ENCODE measurements at regions of chr6 and their contacts with region 1.

Region 1: GRCh38 chr6:156686995-156687788 is 90.0 kb upstream of the ARID1B start:
- DNase-seq: peak; percentile 95
- H3K4me3 ChIP-seq: peak overlapping the region; percentile 53 to 85 (median 62)
- H3K27ac ChIP-seq: peak overlapping the region; percentile 85 to 99 (median 96)
- H3K4me1 ChIP-seq: peaks cover 7 to 52% (median 27%) of the 10 kb centered on the region in 6 donors
- H3K27me3 ChIP-seq: no peaks in the 10 kb centered on the region
- CTCF ChIP-seq: no peak
- POLR2A ChIP-seq: peak in 2 of 3 donors; percentile 63 to 88

Region 2: DNA sequence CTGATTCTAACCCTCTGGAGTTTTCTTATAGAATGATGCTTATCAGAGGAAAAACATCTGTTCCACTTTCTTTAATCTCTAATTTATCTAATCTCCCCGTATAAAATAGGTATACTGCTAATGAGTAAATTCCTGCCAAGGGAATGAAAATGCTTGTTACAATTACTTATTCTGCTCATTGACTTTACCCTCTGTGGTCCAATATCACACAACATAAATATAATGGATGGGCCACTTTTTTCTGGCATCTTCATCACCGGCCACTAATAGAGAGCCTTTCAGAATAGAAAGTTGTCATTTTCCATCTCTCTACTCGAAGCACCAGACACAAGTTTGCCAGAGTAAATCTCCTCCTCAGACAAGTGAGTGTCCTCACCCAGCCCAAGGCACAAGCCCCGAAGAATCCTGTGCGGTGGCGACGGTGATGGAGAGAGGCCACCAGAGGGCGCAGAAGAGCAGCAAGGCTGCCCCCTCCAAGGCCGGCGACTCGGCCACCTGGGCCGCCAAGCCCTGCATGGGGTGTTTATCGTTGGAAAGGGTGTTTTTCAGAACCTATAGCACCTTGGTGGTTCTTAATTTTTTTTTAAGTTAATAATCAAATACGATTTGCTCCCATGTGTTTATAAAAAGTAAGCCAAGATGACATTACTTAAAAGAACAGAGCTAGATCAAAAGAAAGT is 122.9 kb before region 1 on chr6:
- intact Hi-C with region 1: loop called (anchors 10 kb)
- DNase-seq: peak; percentile 95
- H3K4me3 ChIP-seq: no peak overlapping the region
- H3K27ac ChIP-seq: no peak overlapping the region
- H3K4me1 ChIP-seq: peaks cover 0 to 14% (median 7%) of the 10 kb centered on the region in 6 donors
- H3K27me3 ChIP-seq: no peaks in the 10 kb centered on the region
- CTCF ChIP-seq: peak; percentile 73 to 96 (median 88)
- POLR2A ChIP-seq: no peak

Region 3: GRCh38 chr6:156760377-156760776 is 73.2 kb after region 1 on chr6:
- intact Hi-C with region 1: no loop called
- DNase-seq: no peak
- H3K4me3 ChIP-seq: no peak overlapping the region
- H3K27ac ChIP-seq: no peak overlapping the region
- H3K4me1 ChIP-seq: peaks cover 0 to 8% (median 0%) of the 10 kb centered on the region in 6 donors
- H3K27me3 ChIP-seq: no peaks in the 10 kb centered on the region
- CTCF ChIP-seq: no peak
- POLR2A ChIP-seq: no peak

Region 4: DNA sequence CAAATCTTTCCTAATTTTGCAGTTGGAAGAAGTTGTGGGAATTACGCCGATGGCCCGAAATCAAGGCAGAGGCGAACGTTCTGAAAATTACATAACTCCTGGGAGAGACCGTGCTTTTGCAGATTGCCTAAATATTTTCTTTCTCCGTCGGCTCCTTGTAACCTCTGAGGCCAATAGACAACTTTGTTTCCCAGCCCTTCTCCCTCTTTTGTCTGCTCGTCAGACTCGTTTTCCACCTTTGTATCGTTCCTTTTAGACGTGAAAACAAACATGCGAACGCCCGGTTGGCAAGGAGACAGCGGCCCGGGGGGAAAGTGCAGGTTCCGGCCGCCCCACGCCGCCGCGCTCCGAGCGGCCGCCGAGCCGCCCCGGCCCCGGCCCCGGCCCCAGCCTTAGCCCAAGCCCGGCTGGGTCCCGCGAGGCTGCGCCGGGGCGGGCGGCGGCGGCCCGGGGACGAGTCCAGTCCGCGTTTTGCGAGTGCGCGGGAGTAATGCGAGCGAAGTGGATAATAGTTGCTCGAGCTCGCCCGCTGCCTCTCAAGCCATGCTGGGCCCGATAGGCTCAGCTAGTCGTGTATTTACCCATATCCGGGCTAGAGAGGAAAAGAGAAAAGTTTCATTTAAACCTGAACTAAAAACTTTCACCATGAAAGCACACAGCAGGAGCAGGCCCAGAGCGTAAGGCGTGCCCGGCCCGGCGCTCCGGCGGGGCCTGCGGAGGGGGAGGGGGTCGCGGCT is 89.8 kb after region 1 on chr6 and contains the start of gene ARID1B:
- intact Hi-C with region 1: loop called (anchors 5 kb)
- DNase-seq: peak; percentile 97
- H3K4me3 ChIP-seq: peak within 1 kb of the TSS; percentile 65 to 90 (median 72)
- H3K27ac ChIP-seq: peak within 1 kb of the TSS; percentile 95 to 98 (median 98)
- H3K4me1 ChIP-seq: peaks cover 6 to 55% (median 38%) of the 10 kb centered on the region in 6 donors
- H3K27me3 ChIP-seq: no peaks in the 10 kb centered on the region
- CTCF ChIP-seq: no peak
- POLR2A ChIP-seq: peak in 2 of 3 donors; percentile 51 to 73
- total RNA-seq, gene ARID1B: 123 to 223 (median 149) TPM

Measured in spleen (tissue), 13 donors.